Heart left ventricle (tissue), 16 donors: ENCODE measurements at regions of chr10 and their contacts with region 1.

Region 1: GRCh38 chr10:121999318-121999717 is 10.4 kb downstream of the TACC2 start:
- DNase-seq: no peak
- ATAC-seq: peak in 2 of 4 donors; percentile 21 to 48
- H3K4me3 ChIP-seq: no peak overlapping the region
- H3K27ac ChIP-seq: peak overlapping the region; percentile 41 to 97 (median 86)
- H3K4me1 ChIP-seq: peaks cover 0 to 34% (median 7%) of the 10 kb centered on the region in 12 donors
- H3K27me3 ChIP-seq: no peaks in the 10 kb centered on the region
- CTCF ChIP-seq: no peak
- POLR2A ChIP-seq: no peak

Region 2: DNA sequence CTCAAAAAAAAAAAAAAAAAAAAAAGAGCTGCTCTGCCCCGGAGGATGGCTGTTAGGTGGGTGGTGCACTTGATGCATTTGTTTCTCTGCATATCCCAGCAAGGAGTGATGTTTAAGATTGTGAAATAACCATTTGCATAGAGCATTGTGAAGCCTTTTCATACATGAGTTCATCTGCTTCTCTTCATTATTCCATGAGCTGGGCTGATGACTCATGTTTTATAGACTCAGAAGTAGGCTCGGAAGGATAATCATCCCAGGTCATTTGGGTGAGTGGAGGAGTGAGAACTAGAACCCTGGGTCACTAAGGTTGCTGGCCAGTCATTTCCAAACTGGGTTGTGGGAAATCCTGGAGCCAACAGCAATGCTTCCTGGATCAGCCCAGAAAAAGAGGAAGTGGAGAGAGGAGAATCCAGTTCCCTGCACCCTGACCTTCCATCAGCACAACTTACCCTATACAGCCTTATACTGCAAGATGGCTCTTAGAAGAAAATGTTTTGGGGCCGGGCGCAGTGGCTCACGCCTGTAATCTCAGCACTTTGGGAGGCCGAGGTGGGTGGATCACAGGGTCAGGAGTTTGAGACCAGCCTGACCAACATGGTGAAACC is 34.9 kb after region 1 on chr10:
- intact Hi-C with region 1: loop called in 3 of 10 experiments (anchors 5 kb)
- DNase-seq: no peak
- ATAC-seq: no peak
- H3K4me3 ChIP-seq: no peak overlapping the region
- H3K27ac ChIP-seq: peak overlapping the region in 9 of 12 donors; percentile 56 to 92 (median 82)
- H3K4me1 ChIP-seq: peaks cover 0 to 62% (median 20%) of the 10 kb centered on the region in 12 donors
- H3K27me3 ChIP-seq: peaks cover 0 to 6% (median 0%) of the 10 kb centered on the region in 9 donors
- CTCF ChIP-seq: no peak
- POLR2A ChIP-seq: no peak